Breast epithelium (tissue), 4 donors: ENCODE measurements at regions of chr12 and their contacts with region 1.

Region 1: DNA sequence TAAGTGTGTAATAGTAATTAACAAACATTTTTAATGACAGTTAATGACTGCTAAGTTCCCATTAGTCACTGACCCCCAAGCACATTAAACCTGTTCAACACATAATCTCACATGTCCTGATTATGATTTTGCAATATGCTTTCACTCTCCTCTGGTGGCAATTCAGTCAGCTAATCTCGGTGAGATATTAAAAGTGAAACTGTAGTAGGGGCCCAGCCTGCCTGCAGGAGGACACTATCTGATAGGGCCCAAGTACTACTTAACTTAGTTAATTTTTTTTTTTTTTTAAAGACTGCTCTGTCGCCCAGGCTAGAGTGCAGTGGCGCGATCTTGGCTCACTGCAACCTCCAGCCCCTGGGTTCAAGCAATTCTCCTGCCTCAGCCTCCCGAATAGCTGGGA is 48.8 kb downstream of the CIT start:
- DNase-seq: no peak
- H3K4me3 ChIP-seq: no peak overlapping the region
- H3K27ac ChIP-seq: no peak overlapping the region
- H3K4me1 ChIP-seq: no peaks in the 10 kb centered on the region
- H3K27me3 ChIP-seq: no peaks in the 10 kb centered on the region
- CTCF ChIP-seq: no peak
- POLR2A ChIP-seq: no peak

Region 2: GRCh38 chr12:118013283-118013682 is 1815.0 kb before region 1 on chr12:
- intact Hi-C with region 1: loop called (anchors 5 kb)
- DNase-seq: no peak
- H3K4me3 ChIP-seq: no peak overlapping the region
- H3K27ac ChIP-seq: no peak overlapping the region
- H3K4me1 ChIP-seq: no peaks in the 10 kb centered on the region
- H3K27me3 ChIP-seq: no peaks in the 10 kb centered on the region
- CTCF ChIP-seq: no peak
- POLR2A ChIP-seq: no peak

Region 3: DNA sequence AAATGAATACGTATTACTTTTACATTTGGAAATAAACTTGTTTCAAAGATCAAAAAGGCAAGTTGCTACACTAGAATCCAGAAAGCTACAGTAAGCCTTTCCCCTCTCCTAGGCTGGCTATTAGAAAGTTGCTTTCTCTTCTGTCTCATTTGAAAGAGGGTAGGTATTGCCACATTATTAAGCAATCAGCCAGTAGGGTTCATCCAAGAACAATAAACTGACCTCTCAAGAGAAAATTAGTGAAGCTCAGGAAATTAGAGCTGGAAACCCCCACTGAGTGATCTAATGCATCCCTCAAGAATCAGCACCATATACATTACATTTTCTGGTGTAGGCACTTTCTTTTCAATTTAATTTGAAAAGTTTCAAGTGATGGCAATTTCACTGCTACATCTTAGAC is 239.2 kb before region 1 on chr12:
- intact Hi-C with region 1: no loop called
- DNase-seq: no peak
- H3K4me3 ChIP-seq: no peak overlapping the region
- H3K27ac ChIP-seq: no peak overlapping the region
- H3K4me1 ChIP-seq: no peaks in the 10 kb centered on the region
- H3K27me3 ChIP-seq: peaks cover 0 to 28% of the 10 kb centered on the region in 2 donors
- CTCF ChIP-seq: no peak
- POLR2A ChIP-seq: no peak

Region 4: DNA sequence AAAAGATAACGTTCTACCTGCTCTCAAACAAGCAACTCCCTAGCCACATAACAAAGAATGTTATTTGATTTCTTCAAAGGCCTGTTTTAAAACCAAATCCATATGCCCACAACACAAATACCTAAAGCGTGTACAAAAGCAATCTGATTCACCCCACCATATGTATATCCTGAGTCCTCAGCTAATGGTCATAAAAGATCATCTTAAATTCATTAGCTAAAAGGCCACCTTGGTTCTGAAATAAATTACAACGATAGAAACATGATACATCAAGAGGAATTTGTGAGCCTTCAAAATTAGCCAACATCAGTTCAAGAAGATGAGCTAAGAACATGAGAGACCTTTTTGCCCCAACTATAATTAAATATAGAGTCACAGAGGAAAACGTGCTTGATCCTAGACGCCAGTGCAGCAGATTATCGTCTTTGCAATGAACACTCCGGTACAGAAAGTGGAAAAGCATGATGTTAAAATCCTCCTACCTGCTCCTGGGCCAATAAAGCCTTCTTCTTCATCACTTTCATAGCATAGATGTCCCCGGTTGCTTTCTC is 28.8 kb after region 1 on chr12:
- intact Hi-C with region 1: no loop called
- DNase-seq: no peak
- H3K4me3 ChIP-seq: no peak overlapping the region
- H3K27ac ChIP-seq: no peak overlapping the region
- H3K4me1 ChIP-seq: no peaks in the 10 kb centered on the region
- H3K27me3 ChIP-seq: no peaks in the 10 kb centered on the region
- CTCF ChIP-seq: no peak
- POLR2A ChIP-seq: no peak